OCI-LY7 (cell line): ENCODE measurements at regions of chr9 and their contacts with region 1.

Region 1: DNA sequence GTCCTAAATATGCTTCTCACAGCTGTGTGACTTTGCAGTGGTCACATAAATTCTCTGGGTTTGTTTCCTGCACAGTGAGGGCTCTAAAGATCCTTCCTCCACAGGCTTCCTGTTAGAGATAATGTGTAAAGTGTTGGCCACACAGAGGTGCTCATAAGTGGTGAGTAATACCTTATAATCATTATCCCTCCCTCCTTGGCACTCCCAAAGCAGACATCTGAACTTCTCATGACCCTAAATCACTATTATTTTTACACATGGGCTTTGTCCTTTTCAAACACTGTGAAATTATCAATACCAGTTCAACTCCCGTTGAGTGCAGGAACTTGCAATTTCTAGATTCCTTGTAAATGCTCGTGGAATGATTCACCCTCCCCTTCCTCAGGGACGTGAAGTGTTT is 100.2 kb downstream of the BRINP1 start:
- DNase-seq: no peak
- H3K4me3 ChIP-seq: no peak overlapping the region
- H3K27ac ChIP-seq: no peak overlapping the region
- H3K4me1 ChIP-seq: no peaks in the 10 kb centered on the region
- CTCF ChIP-seq: no peak

Region 2: GRCh38 chr9:119322184-119322583 is 53.2 kb after region 1 on chr9:
- CTCF ChIA-PET with region 1: no interaction called
- POLR2A ChIA-PET with region 1: no interaction called
- intact Hi-C with region 1: loop called (anchors 10 kb)
- DNase-seq: no peak
- H3K4me3 ChIP-seq: no peak overlapping the region
- H3K27ac ChIP-seq: no peak overlapping the region
- H3K4me1 ChIP-seq: no peaks in the 10 kb centered on the region
- CTCF ChIP-seq: no peak

Region 3: DNA sequence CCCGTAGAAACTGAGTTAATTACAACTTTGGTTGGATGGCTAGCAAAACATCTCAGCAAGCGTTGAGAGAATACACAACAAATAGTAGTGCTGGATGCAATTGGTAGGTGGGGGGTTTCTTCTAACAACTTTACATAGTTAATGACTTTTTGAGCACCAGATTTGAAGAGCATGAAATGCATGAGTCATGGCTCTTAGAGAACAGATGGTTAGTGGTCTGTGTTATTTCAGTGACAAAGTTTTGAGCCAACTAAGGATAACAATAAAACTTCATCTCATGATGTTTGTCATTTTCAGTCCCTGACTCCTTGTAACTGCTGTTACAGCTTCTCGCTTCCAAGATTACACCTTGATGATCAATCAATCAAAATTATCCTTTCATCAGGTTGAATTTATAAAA is 499.3 kb after region 1 on chr9:
- CTCF ChIA-PET with region 1: no interaction called
- POLR2A ChIA-PET with region 1: no interaction called
- intact Hi-C with region 1: no loop called
- DNase-seq: no peak
- H3K4me3 ChIP-seq: no peak overlapping the region
- H3K27ac ChIP-seq: no peak overlapping the region
- H3K4me1 ChIP-seq: peaks cover 5% of the 10 kb centered on the region
- CTCF ChIP-seq: no peak